Activated CD4-positive, alpha-beta T cell treated with anti-CD3 and anti-CD28 coated beads, Interleukin-2, amount 10 ng/mL, durations not matched to agents 24 days and 14 days (primary cell): ENCODE measurements at regions of chr19 and their contacts with region 1.

Region 1: DNA sequence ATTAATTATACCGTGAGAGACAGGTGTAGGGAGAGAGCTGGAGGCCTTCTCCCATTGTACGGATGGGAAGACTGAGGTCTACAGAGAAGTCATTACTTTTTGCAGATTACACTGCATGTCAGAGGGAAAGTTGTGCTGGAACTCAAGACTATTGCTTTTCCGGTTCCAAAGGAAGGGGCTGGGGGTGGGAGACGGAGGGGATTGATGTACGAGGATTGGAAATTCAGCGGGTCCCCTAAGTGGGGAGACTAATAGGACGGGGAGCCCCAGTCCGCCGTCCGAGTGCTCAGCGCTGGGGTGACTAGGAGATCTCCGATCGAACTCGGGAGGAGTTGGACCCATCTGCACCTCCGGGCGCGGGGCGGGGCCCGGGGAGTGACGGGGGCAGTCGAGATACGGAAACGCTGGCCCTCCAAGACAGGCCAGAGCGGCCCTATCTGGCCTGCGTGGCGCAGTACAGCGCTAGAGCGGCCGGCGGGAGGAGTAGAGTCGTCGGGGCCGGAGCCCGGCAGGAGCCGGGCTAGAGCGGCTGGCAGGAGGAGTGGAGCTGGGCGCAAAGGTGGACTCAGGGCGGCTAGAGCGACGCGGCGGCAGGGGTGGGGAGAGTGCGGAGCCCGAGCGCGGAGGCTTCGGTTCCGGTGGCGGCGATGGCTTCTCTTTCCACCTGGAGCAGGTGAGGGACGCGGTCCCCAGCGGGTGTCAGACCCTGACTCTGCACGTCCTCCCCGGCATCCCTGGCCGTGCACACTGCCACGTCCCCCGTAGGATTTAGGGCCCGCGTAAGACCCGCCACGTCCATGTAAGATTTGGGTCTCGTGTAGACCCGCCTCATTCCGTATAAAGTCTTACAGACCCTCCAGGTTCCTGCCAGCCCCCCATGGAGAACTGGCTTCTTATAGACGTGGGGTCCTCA is 1.1 kb downstream of the ARHGEF1 start:
- DNase-seq: peak; percentile 97
- H3K4me3 Mint-ChIP-seq: peak overlapping the region; percentile 83
- H3K27ac Mint-ChIP-seq: peak overlapping the region; percentile 94
- H3K4me1 Mint-ChIP-seq: peaks cover 50% of the 10 kb centered on the region
- H3K27me3 Mint-ChIP-seq: no peaks in the 10 kb centered on the region

Region 2: DNA sequence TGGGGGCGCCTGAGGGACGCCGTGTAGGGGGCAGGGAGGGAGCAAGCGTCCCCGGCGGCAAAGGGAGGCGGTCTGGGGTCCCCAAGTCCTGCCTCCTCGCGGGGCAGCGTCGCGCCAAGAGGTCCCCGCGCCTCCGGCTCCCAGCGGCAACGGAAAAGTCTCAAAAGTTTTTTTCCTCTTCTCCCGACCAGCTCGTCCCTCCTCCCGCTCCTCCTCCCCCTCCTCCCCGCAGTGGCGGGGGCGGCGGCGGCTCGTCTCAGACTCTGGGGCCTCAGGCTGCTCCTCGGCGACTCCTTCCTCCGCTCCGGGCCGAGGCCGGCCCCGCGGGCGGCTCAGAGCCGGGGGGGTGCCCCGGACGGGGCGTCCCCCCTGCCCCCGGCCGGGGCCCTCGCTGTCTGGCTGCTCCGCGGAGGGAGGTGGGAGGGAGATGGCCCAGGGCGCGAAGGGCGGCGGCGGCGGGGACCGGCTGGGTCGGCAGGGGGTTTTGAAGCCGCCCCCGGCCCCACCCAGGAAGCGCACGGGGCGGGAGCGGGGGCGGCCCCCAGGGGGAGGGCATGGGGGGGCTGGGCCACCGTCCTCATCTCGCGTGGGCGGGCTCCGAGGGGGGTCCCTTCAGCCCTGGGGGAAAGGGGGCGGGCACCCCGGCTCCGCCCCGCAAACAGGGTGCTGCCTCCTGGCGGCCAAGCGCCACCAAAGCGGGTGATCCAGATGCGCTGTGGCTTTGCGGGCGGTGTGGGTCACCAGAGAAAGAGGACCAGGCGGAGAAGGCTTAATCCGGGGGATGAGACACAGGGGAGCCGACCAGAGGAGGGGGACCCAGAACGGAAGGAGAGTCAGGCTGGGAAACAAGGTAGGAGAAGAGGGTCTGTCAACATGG is 530.4 kb before region 1 on chr19 and contains the start of gene TGFB1:
- intact Hi-C with region 1: loop called (anchors 10 kb)
- DNase-seq: peak; percentile 98
- H3K4me3 Mint-ChIP-seq: peak within 1 kb of the TSS; percentile 92
- H3K27ac Mint-ChIP-seq: peak within 1 kb of the TSS; percentile 96
- H3K4me1 Mint-ChIP-seq: peaks cover 56% of the 10 kb centered on the region
- H3K27me3 Mint-ChIP-seq: no peaks in the 10 kb centered on the region
- total RNA-seq, gene TGFB1: 125 and 127 TPM in 2 replicates

Region 3: DNA sequence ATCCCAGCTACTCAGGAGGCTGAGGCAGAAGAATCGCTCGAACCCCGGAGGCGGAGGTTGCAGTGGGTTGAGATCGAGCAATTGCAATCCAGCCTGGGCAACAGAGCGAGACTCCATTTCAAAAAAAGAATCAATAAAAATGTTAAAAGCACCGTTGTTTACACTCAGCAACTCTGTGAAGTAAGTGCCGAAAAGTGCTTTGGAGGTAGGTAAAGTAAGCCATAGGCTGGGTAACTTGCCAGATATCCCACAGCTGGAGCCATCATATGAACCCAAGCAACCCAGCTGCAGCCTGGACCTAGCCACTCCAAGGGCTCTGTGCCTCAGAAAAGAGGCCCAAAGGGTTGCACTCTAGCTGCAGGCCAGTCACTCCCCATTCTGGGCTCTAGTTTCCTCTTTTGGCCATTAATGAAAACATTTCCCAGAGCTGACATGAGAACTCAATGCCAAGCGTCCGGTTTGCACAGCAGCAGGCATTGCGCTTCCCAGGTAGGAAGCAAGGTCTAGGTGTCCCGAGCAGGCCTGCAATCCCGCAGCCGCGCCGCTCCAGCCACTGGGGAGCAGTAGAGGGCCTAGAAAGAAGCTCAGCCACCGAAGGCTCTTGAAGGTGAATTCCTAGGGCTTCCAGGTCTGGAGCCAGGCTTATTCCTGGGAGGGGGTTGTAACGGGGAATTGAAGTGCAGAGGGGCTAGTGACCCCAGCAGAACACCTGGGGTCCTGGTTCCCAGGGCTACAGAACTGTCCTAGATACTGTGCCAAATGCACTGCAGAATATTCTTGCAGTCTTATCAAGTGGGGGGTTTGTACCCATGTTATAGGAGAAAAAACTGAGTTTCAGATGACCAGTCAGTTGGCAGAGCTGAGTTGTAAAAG is 11.1 kb before region 1 on chr19:
- intact Hi-C with region 1: loop called (anchors 1 kb)
- DNase-seq: peak; percentile 90
- H3K4me3 Mint-ChIP-seq: peak overlapping the region; percentile 59
- H3K27ac Mint-ChIP-seq: peak overlapping the region; percentile 83
- H3K4me1 Mint-ChIP-seq: peaks cover 74% of the 10 kb centered on the region
- H3K27me3 Mint-ChIP-seq: no peaks in the 10 kb centered on the region

Region 4: DNA sequence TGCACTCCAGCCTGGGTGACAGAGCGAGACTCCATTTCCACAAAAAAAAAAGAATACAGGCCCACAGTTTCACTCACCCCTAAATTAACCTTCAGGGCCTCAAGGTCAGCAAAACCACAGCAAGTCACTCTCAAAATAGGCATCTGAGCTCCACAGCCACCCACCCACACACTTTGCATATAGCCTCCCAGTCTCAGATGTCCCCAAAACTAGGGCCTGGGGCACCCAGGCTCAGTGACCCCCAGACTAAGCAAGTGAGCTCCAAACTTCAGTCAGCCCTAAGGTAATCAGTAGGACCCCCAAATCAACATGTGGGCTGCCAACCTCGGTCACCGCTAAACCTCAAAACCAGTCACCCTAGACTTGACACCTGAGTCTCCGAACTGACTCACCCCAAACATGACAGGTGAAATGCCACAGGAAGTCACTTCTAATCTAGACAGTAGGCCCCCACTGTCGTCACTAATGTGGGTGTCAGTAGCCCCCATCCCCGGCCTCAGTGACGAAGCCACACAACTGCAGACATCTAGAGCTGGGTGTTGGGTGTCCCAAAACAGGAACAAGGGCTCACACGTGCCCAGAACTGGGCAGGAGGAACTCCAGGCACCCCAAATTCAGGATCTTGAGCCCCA is 61.2 kb after region 1 on chr19:
- intact Hi-C with region 1: loop called (anchors 1 kb)
- DNase-seq: peak; percentile 90
- H3K4me3 Mint-ChIP-seq: peak overlapping the region; percentile 76
- H3K27ac Mint-ChIP-seq: peak overlapping the region; percentile 99
- H3K4me1 Mint-ChIP-seq: peaks cover 49% of the 10 kb centered on the region
- H3K27me3 Mint-ChIP-seq: peaks cover 9% of the 10 kb centered on the region

Region 5: DNA sequence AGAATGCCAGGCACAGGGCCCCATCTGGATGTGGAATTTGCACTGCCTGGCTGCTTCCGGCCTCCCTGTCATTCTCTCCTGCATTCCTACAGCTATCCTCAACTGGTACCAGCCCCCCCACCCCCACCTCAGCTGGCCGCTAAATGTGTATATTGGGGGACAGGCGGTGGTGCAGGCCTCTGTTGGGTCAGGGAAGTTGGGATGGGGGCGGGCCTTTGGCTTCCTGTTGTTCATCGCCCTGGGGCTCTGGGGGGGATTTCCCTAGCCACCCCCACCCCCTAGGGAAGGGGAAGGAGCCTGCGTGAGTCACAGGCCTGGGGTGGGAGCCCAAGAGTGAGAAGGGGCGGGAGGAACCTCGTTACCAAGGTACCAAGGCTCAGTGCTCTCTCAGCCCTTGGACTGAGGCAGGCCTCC is 237.6 kb after region 1 on chr19:
- intact Hi-C with region 1: loop called (anchors 2 kb)
- DNase-seq: peak; percentile 92
- H3K4me3 Mint-ChIP-seq: peak overlapping the region; percentile 80
- H3K27ac Mint-ChIP-seq: peak overlapping the region; percentile 95
- H3K4me1 Mint-ChIP-seq: peaks cover 52% of the 10 kb centered on the region
- H3K27me3 Mint-ChIP-seq: no peaks in the 10 kb centered on the region